PC-3 (cell line): ENCODE measurements at regions of chr7 and their contacts with region 1.

Region 1: GRCh38 chr7:18873734-18874336 is 243.6 kb downstream of the TWIST1 start:
- DNase-seq: peak; percentile 39
- ATAC-seq: peak; percentile 74
- H3K4me3 ChIP-seq: no peak overlapping the region
- H3K27ac ChIP-seq: no peak overlapping the region
- H3K4me1 ChIP-seq: peaks cover 5% of the 10 kb centered on the region; the same call in 1 of the 2 replicates
- H3K27me3 ChIP-seq: no peaks in the 10 kb centered on the region
- CTCF ChIP-seq: peak; percentile 64

Region 2: DNA sequence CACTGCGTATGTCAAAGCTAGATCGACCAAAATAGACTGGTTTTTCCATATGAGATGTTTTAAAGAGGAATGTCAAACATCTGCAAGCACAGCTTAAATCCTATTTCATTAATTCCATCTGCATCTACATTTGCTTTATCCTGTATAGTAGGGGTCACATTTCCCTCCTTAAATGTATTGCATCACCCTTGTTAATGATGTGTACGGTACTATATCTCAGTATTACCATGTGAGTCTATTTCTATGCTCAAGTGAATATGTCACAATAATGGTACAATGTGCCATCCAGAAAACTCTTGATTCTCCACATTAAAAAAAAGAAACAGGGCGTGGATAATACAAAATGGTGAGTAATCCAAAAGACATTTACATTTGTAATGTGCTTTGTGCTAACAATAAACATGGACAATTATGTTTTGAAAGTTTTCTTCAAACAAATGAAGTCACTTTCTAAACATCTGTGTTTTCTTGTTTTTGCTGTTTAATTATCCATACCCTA is 187.0 kb after region 1 on chr7:
- CTCF ChIA-PET with region 1: no interaction called
- POLR2A ChIA-PET with region 1: no interaction called
- intact Hi-C with region 1: loop called (anchors 2 kb)
- DNase-seq: peak; percentile 68
- ATAC-seq: peak; percentile 87
- H3K4me3 ChIP-seq: no peak overlapping the region
- H3K27ac ChIP-seq: no peak overlapping the region
- H3K4me1 ChIP-seq: peaks cover 14% of the 10 kb centered on the region
- H3K27me3 ChIP-seq: no peaks in the 10 kb centered on the region
- CTCF ChIP-seq: no peak